ENCODE measurements at regions of chr5 and their contacts with region 1.

Region 1: GRCh38 chr5:165919196-165919595 is 2372.2 kb upstream of the WWC1 start:
- DNase-seq: no peak
- H3K27ac ChIP-seq: no peak overlapping the region
- CTCF ChIP-seq: no peak

Region 2: DNA sequence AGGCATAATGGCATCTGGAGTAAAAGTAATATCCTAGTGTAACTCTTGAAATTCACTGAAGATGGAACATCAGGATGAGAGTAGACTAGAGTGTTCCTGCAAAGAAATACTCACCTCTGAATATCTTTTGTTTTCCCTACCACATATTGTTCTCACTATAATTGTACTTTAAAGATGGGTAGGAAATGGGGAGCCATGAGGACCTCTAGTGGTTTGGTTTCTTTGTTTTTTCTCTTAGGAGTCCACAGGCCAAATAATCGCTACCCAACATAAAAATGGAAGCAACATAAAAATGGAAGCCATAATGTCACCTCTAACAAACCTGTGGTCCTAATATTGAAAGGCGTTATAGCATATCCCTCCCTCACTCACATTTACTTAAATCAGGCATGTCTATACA is 37.9 kb before region 1 on chr5:
- CTCF ChIA-PET with region 1: no interaction called
- POLR2A ChIA-PET with region 1: no interaction called
- DNase-seq: peak; percentile 7
- H3K27ac ChIP-seq: no peak overlapping the region
- CTCF ChIP-seq: no peak

Region 3: DNA sequence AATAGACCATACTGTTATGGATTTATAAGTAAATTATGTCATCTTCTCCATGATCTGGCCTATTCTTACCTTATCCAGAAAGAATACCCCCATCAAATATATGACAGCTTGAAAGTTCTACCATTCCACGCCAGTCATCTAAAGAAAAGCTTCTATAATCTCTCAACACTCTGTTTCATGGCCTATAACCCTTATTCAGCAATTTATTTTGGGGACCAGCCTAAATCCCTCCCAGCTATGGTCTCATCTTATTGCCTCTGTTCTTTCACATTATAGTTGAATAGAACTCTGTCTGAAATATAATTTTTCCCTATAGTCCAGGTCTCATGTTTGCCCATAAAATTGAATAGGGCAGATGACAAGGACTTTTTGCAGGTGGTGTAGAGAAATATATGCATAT is 15.4 kb before region 1 on chr5:
- CTCF ChIA-PET with region 1: interaction called, 3 read pairs
- POLR2A ChIA-PET with region 1: interaction called, 11 read pairs
- DNase-seq: no peak
- H3K27ac ChIP-seq: no peak overlapping the region
- CTCF ChIP-seq: no peak

Region 4: DNA sequence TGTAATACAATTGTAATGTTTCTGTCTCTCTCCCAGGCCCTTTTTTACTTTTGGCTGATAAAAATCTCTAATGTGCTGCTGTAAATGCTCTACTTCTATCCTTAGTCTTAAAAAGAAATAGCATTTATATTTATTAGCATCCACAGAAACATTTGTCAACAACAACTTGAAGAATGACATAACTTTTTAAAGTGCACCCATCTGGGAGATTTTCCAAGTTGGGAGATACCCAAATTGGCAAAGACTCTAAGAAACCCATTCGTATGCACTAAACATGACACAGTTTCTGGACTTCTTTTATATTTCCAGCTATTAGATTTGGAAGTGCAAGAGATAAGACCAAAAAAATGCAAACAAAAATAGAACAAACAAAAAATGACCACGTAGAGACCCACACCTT is 84.8 kb after region 1 on chr5:
- CTCF ChIA-PET with region 1: no interaction called
- POLR2A ChIA-PET with region 1: no interaction called
- DNase-seq: no peak
- H3K27ac ChIP-seq: no peak overlapping the region
- CTCF ChIP-seq: no peak